Heart left ventricle (tissue), 16 donors: ENCODE measurements at regions of chr18 and their contacts with region 1.

Region 1: GRCh38 chr18:79378542-79379250 is 17.0 kb upstream of the NFATC1 start:
- DNase-seq: peak; percentile 76 to 89 (median 82)
- ATAC-seq: peak; percentile 54 to 86 (median 78)
- H3K4me3 ChIP-seq: no peak overlapping the region
- H3K27ac ChIP-seq: no peak overlapping the region
- H3K4me1 ChIP-seq: peaks cover 0 to 8% (median 4%) of the 10 kb centered on the region in 12 donors
- H3K27me3 ChIP-seq: no peaks in the 10 kb centered on the region
- CTCF ChIP-seq: peak; percentile 93 to 99 (median 97)
- POLR2A ChIP-seq: no peak

Region 2: DNA sequence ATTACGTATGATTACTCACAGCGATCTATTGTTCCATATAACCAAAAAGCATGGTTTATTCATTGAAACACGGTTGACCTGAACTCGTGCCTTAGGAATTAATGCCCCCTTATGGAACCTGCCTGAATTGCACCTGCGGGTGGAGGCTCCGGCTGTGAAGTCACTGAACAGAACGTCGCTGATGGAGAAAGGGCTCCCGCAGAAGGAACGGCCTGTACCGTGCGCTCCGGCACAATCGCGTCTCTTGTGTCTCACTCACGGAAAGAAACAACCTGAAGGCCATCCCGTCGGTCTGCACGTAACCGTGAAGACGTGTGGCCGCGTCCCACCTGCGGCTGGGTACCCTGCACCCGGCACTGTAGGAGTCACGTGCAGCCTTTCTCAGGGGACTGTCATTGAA is 150.2 kb after region 1 on chr18:
- intact Hi-C with region 1: loop called (anchors 1 to 2 kb)
- DNase-seq: peak; percentile 53 to 70 (median 67)
- ATAC-seq: peak; percentile 18 to 60 (median 42)
- H3K4me3 ChIP-seq: no peak overlapping the region
- H3K27ac ChIP-seq: no peak overlapping the region
- H3K4me1 ChIP-seq: peaks cover 0 to 21% (median 12%) of the 10 kb centered on the region in 12 donors
- H3K27me3 ChIP-seq: peaks cover 0 to 7% (median 0%) of the 10 kb centered on the region in 9 donors
- CTCF ChIP-seq: peak; percentile 83 to 95 (median 91)
- POLR2A ChIP-seq: no peak

Region 3: DNA sequence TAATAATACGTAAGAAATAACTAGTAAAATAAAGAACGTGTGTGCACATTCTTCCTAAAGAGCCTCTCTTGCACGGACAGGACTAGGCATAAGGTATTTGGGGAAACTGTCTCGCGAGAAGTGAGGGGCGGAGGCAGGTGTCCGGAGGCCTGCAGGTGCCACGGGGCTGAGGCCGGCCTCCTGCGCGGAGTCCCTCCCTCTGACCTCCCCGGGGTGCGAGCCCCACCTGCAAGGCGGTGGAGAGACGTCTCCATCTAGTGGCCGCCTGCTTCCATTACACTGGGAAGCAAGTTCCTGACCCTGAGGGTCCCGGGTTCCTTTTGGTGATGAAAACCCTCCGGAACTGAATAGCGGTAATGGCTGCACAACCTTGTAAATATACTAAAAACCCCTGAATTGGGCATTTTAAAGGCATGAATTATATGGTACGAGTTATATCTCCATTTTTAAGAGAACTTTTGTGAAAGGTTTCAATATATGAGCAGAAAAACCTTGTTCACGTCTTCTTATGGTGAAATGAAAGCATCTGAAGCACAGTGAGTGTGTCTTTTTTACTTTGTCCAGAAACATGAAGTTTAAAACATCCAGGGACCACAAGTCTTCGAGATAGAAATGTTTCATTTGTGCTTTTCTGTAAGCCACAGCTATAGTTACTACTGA is 265.4 kb after region 1 on chr18:
- intact Hi-C with region 1: loop called (anchors 1 to 2 kb)
- DNase-seq: peak; percentile 55 to 84 (median 61)
- ATAC-seq: peak; percentile 79 to 88 (median 80)
- H3K4me3 ChIP-seq: peak overlapping the region in 2 of 12 donors; percentile 4 to 9
- H3K27ac ChIP-seq: no peak overlapping the region
- H3K4me1 ChIP-seq: peaks cover 0 to 16% (median 3%) of the 10 kb centered on the region in 12 donors
- H3K27me3 ChIP-seq: peaks cover 0 to 25% (median 0%) of the 10 kb centered on the region in 9 donors
- CTCF ChIP-seq: peak in 11 of 12 donors; percentile 94 to 100 (median 97)
- POLR2A ChIP-seq: no peak

Region 4: DNA sequence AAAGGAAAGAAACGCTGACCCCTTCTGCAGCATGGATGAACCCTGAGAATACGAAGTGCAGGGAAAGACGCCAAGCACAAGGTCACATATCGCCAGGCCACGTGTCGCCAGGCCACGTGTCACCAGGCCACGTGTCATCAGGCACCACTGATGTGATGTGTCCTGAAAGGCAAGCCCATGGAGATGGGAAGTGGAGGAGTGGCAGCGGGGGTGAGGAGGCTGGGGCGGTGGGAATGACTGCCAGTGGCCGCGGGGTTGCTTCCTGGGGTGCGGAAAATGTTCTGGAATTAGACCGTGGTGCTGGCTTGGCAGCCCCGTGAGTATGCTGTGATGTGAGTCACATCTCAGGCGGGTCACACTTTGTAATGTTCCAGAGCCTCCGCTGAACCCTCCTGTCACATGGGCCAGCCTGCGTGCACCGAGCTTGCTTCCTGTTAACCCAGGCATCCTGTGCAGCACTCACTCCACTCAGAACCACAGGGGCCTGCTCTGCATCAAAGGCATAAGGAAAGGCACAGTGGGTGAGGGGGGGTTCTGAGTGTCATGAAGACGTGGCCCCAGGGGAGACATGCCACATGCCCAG is 533.8 kb after region 1 on chr18:
- intact Hi-C with region 1: loop called in 1 of 10 experiments (anchors 10 kb)
- DNase-seq: peak in 1 of 5 donors; percentile 30
- ATAC-seq: peak in 2 of 4 donors; percentile 49 to 63
- H3K4me3 ChIP-seq: no peak overlapping the region
- H3K27ac ChIP-seq: no peak overlapping the region
- H3K4me1 ChIP-seq: no peaks in the 10 kb centered on the region
- H3K27me3 ChIP-seq: no peaks in the 10 kb centered on the region
- CTCF ChIP-seq: no peak
- POLR2A ChIP-seq: no peak